BJ (cell line): ENCODE measurements at regions of chr20 and their contacts with region 1.

Region 1: DNA sequence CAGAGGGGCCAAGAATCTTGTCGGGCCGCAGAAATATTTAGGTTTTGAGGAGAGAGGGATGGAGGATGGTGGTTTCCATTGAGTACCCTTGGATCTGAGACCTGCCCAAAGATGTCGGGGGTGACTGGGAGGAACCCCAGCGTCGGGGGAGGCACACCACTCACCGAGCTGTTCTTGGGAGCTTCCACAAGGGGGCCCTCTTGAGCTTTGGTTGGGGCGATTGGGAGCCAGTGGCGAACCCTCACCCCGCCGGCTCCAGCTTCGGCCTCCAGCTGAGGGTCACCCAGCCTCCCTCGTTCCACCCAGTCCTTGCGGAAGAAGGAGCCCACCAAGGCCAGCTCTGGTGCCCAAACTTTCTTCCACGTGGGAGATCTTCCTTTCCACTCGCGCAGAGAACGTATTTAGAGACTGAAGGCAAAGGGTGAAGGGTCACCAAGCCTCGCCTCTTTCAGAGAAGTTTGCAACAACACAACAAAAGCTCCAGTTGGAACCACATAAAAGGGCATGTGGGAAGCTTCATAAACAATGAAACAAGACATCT is 33.6 kb downstream of the APCDD1L start:
- DNase-seq: no peak
- H3K4me3 ChIP-seq: no peak overlapping the region
- H3K27me3 ChIP-seq: no peaks in the 10 kb centered on the region
- CTCF ChIP-seq: peak; percentile 70

Region 2: GRCh38 chr20:57866221-57867106 is 615.1 kb before region 1 on chr20:
- CTCF ChIA-PET with region 1: no interaction called
- POLR2A ChIA-PET with region 1: no interaction called
- DNase-seq: no peak
- H3K4me3 ChIP-seq: no peak overlapping the region
- H3K27me3 ChIP-seq: peaks cover 12% of the 10 kb centered on the region
- CTCF ChIP-seq: no peak

Region 3: DNA sequence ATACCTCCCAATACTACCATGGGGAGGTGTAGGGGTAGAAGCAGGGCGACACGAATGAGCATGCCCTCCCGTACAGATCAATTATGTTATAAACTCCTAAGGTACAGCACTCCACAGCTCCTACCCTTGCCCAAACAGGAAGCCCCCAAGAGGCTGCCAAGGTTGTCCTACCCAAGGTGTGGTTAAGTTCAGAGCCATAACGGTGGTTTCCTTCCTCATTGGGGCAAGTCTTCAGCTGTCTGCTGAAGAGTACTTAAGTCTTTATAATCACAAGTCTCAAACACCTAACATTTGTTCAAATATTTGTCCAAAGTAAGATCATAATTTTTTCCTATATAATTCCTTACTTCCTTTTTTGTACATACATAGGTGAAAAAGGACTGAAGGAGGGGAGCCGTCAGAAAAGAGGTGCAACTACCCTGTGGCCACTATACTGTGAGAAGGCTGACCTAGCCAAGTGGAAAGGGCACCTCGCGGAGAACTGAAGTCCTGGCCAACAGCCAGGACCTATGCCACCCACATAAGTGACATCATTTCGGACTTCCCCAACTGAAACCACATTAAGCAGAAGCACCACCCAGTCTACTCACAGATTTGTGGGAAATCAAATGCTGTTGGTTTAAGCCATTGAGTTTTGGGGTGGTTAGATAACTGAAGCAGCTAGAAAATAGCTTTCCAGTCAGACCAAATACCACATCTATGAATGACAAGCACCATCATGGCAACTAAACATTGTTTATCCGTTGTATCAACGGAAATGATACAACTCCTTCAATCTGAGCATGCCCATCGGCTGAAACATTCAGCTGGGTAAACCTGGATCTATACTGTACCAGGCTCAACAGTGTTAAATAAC is 174.9 kb before region 1 on chr20:
- CTCF ChIA-PET with region 1: no interaction called
- POLR2A ChIA-PET with region 1: no interaction called
- DNase-seq: no peak
- H3K4me3 ChIP-seq: no peak overlapping the region
- H3K27me3 ChIP-seq: no peaks in the 10 kb centered on the region
- CTCF ChIP-seq: no peak

Region 4: DNA sequence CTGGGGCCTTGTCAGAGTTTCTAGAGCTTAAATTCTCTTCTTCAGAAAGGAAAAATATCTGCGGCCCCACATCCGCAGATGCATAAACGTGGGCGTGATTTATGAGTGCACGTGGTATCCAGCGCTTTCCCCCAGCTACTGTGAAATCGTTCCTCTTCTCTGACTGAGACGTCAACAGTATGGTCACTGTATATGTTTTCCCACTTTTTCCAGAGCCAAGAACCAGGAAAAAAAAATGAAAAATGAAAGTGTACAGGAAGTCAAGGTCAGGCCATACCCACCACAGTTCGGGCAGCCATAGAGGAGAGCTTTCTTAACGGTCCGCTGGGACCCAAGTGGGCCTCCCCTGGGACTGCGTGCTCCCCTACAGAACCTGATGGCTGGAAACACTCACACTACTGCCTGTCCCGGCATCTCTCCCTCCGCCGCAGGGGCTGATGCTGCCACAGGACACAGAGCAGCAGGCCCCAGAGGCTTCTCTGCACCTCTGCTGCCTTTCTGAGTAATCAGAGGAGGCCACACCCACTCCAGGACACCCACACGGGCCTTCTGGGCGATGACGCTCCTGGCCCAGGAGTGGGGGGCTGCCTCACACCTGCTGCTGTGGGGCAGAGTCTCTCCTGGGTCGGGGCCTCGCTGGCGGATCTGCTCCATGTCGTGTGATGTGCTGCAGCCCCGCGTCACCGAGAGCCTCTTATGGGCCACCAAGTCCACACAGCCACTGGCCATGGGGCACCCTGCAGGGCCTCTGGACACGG is 153.1 kb after region 1 on chr20:
- CTCF ChIA-PET with region 1: no interaction called
- POLR2A ChIA-PET with region 1: interaction called, 23 read pairs
- DNase-seq: no peak
- H3K4me3 ChIP-seq: no peak overlapping the region
- H3K27me3 ChIP-seq: no peaks in the 10 kb centered on the region
- CTCF ChIP-seq: no peak

Region 5: GRCh38 chr20:58691773-58692593 is 210.4 kb after region 1 on chr20:
- CTCF ChIA-PET with region 1: interaction called, 12 read pairs
- POLR2A ChIA-PET with region 1: interaction called, 5 read pairs
- DNase-seq: no peak
- H3K4me3 ChIP-seq: no peak overlapping the region
- H3K27me3 ChIP-seq: no peaks in the 10 kb centered on the region
- CTCF ChIP-seq: no peak

Region 6: DNA sequence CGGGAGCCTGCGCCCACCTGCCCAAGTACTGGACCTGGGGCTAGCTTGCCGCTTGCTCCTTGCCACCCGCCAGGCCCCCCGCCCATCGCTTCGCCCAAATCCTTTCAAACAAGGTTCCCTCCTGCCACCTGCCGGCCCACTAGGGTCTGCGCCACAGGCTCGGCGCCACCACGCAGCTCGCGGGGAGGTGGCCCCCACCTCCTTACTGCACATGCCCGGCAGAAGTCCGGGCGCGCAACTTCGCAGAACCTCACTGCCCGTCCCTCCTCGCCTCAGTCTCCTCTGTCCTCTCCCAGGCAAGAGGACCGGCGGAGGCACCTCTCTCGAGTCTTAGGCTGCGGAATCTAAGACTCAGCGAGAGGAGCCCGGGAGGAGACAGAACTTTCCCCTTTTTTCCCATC is 357.9 kb after region 1 on chr20:
- CTCF ChIA-PET with region 1: interaction called, 16 read pairs
- POLR2A ChIA-PET with region 1: no interaction called
- DNase-seq: no peak
- H3K4me3 ChIP-seq: no peak overlapping the region
- H3K27me3 ChIP-seq: peaks cover 11% of the 10 kb centered on the region
- CTCF ChIP-seq: peak; percentile 51